ENCODE measurements at regions of chr7 and their contacts with region 1.

Region 1: GRCh38 chr7:74206589-74207120 is 3.2 kb upstream of the LAT2 start:
- DNase-seq: peak; percentile 72
- H3K4me3 ChIP-seq: no peak overlapping the region
- H3K27ac ChIP-seq: no peak overlapping the region
- H3K4me1 ChIP-seq: no peaks in the 10 kb centered on the region
- H3K27me3 ChIP-seq: no peaks in the 10 kb centered on the region
- CTCF ChIP-seq: peak; percentile 97
- POLR2A ChIP-seq: no peak

Region 2: GRCh38 chr7:73865738-73866445 is 340.8 kb before region 1 on chr7:
- CTCF ChIA-PET with region 1: interaction called, 12 read pairs
- POLR2A ChIA-PET with region 1: no interaction called
- dilution Hi-C with region 1: no loop called
- intact Hi-C with region 1: loop called (anchors 2 kb)
- DNase-seq: peak; percentile 62
- H3K4me3 ChIP-seq: no peak overlapping the region
- H3K27ac ChIP-seq: no peak overlapping the region
- H3K4me1 ChIP-seq: no peaks in the 10 kb centered on the region
- H3K27me3 ChIP-seq: no peaks in the 10 kb centered on the region
- CTCF ChIP-seq: peak; percentile 61 to 77
- POLR2A ChIP-seq: no peak

Region 3: GRCh38 chr7:74191231-74191630 is 15.4 kb before region 1 on chr7:
- CTCF ChIA-PET with region 1: interaction called, 19 read pairs
- POLR2A ChIA-PET with region 1: no interaction called
- dilution Hi-C with region 1: no loop called
- intact Hi-C with region 1: no loop called
- DNase-seq: no peak
- H3K4me3 ChIP-seq: no peak overlapping the region
- H3K27ac ChIP-seq: no peak overlapping the region
- H3K4me1 ChIP-seq: peaks cover 12% of the 10 kb centered on the region
- H3K27me3 ChIP-seq: no peaks in the 10 kb centered on the region
- CTCF ChIP-seq: no peak
- POLR2A ChIP-seq: no peak

Region 4: GRCh38 chr7:74236284-74236683 is 29.6 kb after region 1 on chr7:
- CTCF ChIA-PET with region 1: interaction called, 11 read pairs
- POLR2A ChIA-PET with region 1: no interaction called
- dilution Hi-C with region 1: no loop called
- intact Hi-C with region 1: no loop called
- DNase-seq: no peak
- H3K4me3 ChIP-seq: no peak overlapping the region
- H3K27ac ChIP-seq: no peak overlapping the region
- H3K4me1 ChIP-seq: no peaks in the 10 kb centered on the region
- H3K27me3 ChIP-seq: no peaks in the 10 kb centered on the region
- CTCF ChIP-seq: no peak
- POLR2A ChIP-seq: no peak

Region 5: DNA sequence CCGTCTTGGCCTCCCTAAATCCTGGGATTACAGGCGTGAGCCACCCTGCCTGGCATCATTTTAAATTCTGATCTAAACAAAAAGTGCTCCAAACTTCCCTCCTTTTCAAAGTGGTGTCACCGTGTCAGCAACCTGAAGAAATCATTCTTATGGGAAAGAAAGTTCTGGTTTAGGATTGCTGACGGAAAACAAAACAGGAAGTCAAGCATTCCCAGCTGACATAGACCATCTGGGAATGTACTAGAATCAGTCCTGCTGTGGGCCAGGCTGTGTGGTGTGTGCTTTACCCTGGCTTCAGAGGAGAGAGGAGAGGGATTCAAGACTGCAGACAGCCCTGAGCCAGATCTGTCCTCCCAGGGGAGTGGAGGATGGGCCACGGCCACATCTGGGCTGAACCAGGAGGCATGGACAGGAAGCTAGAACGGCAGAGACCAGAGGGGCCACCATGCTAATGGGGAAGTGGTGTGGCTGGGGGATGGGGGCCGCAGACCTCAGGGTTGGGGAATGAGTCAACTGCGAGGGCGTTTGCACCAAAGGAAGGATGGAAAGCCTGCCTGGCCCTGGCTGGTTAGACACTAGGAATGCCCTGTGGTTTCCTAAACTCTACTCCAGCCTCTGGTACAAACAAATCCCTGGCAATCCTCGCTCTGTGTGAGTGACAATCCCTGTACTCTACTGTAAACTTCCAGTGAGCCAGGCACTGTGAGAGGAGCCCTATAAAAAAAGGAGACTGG is 65.8 kb after region 1 on chr7:
- CTCF ChIA-PET with region 1: interaction called, 11 read pairs
- POLR2A ChIA-PET with region 1: no interaction called
- dilution Hi-C with region 1: no loop called
- intact Hi-C with region 1: loop called (anchors 10 kb)
- DNase-seq: peak; percentile 90
- H3K4me3 ChIP-seq: no peak overlapping the region
- H3K27ac ChIP-seq: peak overlapping the region; percentile 88
- H3K4me1 ChIP-seq: peaks cover 16% of the 10 kb centered on the region
- H3K27me3 ChIP-seq: no peaks in the 10 kb centered on the region
- CTCF ChIP-seq: no peak
- POLR2A ChIP-seq: no peak

Region 6: DNA sequence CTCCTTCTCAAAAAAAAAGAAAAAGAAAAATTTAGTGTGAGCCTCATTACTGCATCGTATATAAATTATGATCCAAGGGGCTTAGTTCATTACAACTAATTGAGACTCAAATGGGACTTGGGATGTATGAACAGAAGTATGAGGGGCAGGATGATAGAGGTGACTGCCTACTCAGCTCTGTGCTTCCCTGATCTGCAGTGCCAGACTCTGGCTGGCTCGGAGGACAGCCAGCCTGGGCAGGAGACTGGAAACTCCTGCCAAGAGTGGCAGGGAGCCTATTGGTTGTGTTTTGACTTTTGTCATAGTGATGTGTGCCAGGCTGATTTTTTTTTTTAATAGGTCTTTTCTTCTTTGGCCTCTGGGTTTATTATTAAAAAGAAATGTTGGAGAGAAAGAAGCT is 173.3 kb after region 1 on chr7:
- CTCF ChIA-PET with region 1: interaction called, 14 read pairs
- POLR2A ChIA-PET with region 1: no interaction called
- dilution Hi-C with region 1: no loop called
- intact Hi-C with region 1: no loop called
- DNase-seq: no peak
- H3K4me3 ChIP-seq: no peak overlapping the region
- H3K27ac ChIP-seq: no peak overlapping the region
- H3K4me1 ChIP-seq: no peaks in the 10 kb centered on the region
- H3K27me3 ChIP-seq: no peaks in the 10 kb centered on the region
- CTCF ChIP-seq: no peak
- POLR2A ChIP-seq: no peak

Region 7: GRCh38 chr7:74401137-74401859 is 194.6 kb after region 1 on chr7:
- CTCF ChIA-PET with region 1: interaction called, 405 read pairs
- POLR2A ChIA-PET with region 1: interaction called, 7 read pairs
- dilution Hi-C with region 1: no loop called
- intact Hi-C with region 1: loop called (anchors 1 kb)
- DNase-seq: peak; percentile 52
- H3K4me3 ChIP-seq: no peak overlapping the region
- H3K27ac ChIP-seq: no peak overlapping the region
- H3K4me1 ChIP-seq: no peaks in the 10 kb centered on the region
- H3K27me3 ChIP-seq: no peaks in the 10 kb centered on the region
- CTCF ChIP-seq: peak; percentile 88 to 95
- POLR2A ChIP-seq: no peak

Measured in endothelial cell of umbilical vein (primary cell).